ENCODE measurements at regions of chr7 and their contacts with region 1.

Region 1: DNA sequence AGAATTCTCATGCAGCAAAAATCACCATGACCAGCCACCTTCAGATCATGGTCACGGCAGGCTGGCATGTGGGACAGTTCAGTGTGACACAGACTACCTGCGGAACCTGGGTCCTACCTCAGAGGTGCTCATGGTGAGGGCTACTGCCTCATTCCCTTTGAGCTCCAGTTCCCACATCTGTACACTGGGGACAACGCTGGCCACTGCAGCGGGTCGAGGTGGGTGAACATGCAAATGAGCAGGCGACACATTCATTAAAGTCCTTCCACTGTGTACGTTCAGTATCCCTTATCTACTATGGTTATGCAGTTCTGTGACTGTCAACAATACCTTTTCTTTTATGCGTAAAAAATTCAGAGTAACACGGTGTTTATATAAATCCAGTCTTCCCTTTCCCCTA is 218.7 kb upstream of the AOAH start:
- DNase-seq: no peak

Region 2: DNA sequence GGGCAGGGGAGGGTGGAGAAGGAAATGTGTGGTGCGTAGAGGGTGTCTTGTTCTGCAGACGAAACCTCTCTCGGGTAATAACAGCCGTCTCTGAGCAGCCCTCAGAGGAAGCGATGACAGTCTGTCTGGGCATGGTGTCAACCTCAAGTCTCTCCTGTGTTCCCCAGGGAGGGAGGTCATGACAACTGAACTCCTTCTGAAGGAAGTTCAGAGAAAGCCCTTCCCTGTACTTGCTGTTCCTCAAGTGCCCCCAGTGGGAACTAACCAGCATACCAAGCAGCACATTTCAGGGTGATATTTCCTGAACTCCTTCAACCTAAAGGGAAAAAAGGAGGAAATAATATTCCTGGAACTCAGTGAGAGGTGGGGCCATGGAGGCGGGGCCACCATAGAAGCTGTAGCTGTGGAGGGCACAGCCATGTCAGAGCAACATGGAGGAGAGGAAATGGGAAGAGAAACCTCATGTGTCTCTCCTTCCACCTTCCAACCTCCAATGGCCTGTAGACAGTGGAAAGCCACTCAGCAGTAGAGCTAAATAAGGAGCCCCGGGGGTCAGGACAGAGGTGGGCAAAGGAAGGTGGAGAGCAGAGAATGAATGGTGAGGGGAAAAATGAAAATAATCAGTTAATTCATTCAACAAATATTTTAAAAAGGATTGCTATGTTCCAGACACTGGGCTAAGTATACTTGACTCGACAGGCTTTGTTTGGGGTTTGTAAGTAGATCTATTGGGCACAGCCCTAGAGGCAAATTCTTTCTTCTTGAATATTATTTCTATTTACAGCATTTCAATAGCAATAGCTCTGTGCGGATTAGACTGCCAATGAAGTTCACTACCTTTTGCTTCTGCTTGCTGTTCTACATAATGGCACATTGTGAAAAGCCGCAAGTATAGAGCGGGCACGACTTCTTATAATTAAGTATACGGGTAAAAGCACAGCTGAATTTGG is 157.7 kb before region 1 on chr7:
- intact Hi-C with region 1: no loop called
- DNase-seq: peak; percentile 84

Region 3: DNA sequence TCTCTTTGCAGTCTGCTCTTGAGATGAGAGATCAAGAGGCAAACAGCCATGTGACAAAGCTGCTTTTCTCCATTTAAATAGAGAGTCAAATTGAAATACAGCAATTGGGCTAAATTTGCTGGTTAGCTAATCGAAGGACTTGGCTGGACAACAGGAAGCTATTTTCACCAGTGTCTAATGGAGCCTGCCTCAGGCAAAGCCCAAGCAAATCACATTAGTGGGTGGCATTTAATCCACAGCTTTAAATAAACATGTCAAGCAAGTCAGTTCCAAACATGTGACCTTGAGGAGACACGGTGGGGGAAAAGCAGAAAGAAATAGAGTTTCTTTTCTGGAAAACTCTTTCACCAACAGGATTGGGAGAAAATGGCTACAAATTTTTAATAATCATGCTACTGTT is 38.2 kb before region 1 on chr7:
- intact Hi-C with region 1: loop called in 1 of 2 experiments (anchors 1 kb)
- DNase-seq: no peak

Measured in posterior vena cava (tissue), 2 donors.